ENCODE measurements at regions of chr5 and their contacts with region 1.

Region 1: GRCh38 chr5:91280362-91281269 is 102.5 kb downstream of the ARRDC3 start:
- DNase-seq: peak; percentile 73 to 94
- H3K4me3 ChIP-seq: peak overlapping the region; percentile 60 to 72
- H3K27ac ChIP-seq: peak overlapping the region; percentile 77 to 85
- H3K4me1 ChIP-seq: peaks cover 0 to 7% of the 10 kb centered on the region in 2 donors
- H3K27me3 ChIP-seq: no peaks in the 10 kb centered on the region
- CTCF ChIP-seq: no peak

Region 2: DNA sequence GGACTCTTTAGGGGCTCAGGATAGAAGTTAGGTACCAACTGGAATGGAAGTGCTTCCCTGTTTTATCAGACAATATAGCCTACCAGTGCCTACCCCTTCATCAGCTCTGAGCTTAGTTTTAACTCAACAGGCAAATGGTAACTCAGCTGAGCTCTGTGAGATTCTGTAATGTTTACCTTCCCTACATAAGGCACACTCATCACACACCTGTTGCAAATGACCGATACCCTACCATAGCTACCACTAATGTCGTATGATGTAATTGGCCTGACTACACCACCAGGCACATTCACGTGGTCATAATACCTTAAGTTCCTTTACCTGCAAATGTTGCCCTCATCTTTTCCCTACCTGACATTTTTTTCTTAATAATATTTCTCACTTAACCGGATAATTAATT is 467.2 kb before region 1 on chr5:
- intact Hi-C with region 1: no loop called
- DNase-seq: no peak
- H3K4me3 ChIP-seq: no peak overlapping the region
- H3K27ac ChIP-seq: no peak overlapping the region
- H3K4me1 ChIP-seq: no peaks in the 10 kb centered on the region
- H3K27me3 ChIP-seq: no peaks in the 10 kb centered on the region
- CTCF ChIP-seq: no peak

Region 3: DNA sequence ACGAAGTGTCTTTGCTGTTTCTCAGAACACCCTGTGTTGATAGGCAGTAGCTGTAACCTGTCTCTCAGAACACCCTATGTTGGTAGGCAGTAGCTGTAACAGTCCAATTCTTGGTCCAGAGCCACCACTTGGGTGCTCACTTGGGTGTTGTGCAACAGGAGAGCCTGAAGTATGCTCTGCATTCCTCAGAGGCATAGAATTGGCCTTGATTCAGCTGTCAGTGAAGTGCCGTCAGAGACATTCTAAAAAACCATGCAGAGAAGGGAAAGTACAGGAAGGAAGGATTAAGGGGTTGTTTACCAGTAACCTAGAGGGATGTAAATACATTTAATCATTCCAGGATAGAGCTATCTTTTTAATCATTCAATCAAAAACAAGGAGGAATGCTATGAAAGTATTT is 128.7 kb before region 1 on chr5:
- intact Hi-C with region 1: loop called (anchors 5 kb)
- DNase-seq: peak in 1 of 2 donors; percentile 87
- H3K4me3 ChIP-seq: no peak overlapping the region
- H3K27ac ChIP-seq: peak overlapping the region; percentile 6 to 8
- H3K4me1 ChIP-seq: peaks cover 6 to 31% of the 10 kb centered on the region in 2 donors
- H3K27me3 ChIP-seq: no peaks in the 10 kb centered on the region
- CTCF ChIP-seq: no peak

Region 4: GRCh38 chr5:91183737-91184136 is 96.9 kb before region 1 on chr5:
- intact Hi-C with region 1: no loop called
- DNase-seq: no peak
- H3K4me3 ChIP-seq: no peak overlapping the region
- H3K27ac ChIP-seq: no peak overlapping the region
- H3K4me1 ChIP-seq: no peaks in the 10 kb centered on the region
- H3K27me3 ChIP-seq: no peaks in the 10 kb centered on the region
- CTCF ChIP-seq: no peak

Region 5: GRCh38 chr5:91296691-91297143 is 16.1 kb after region 1 on chr5:
- intact Hi-C with region 1: loop called (anchors 2 kb)
- DNase-seq: peak in 1 of 2 donors; percentile 90
- H3K4me3 ChIP-seq: no peak overlapping the region
- H3K27ac ChIP-seq: peak overlapping the region; percentile 5 to 64
- H3K4me1 ChIP-seq: peaks cover 0 to 4% of the 10 kb centered on the region in 2 donors
- H3K27me3 ChIP-seq: no peaks in the 10 kb centered on the region
- CTCF ChIP-seq: no peak

Region 6: DNA sequence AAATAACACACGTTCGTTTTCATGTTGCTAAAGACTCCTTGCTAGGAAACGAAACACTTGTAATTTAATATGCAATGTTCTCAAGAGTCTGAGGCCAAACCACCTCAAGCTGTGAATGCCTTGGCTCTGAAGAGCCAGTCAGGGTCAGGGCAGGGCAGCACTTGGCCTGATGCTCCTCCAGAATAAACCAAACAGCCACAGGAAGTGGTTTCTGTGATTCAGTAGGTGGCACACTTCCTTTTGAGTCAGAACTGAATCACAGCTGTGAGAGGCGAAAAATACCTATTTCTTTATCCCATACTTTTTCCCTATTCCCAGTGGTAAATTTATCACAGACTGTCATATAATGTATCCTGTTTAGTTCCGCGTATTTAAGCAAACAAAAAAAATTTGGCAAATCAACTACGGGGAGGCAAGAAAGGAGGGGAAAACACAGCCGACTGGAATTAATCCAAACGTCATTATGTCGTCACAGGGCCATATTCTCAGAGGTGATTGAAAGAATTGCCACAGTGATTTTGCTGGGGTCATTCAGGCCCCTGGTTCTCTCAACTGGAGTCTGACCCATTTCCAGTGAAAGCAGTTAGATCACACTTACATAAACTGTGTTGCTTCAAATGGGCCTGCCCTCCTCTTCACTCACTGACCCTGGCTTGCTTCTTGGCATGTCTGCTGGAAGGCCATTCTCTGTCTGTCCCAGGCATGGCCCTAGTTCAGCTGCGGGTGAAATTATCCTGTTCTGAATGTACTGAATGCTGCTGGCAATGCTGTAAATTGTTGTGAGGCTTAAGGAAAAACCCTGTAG is 31.3 kb after region 1 on chr5:
- intact Hi-C with region 1: loop called (anchors 1 kb)
- DNase-seq: peak; percentile 62 to 93
- H3K4me3 ChIP-seq: no peak overlapping the region
- H3K27ac ChIP-seq: peak overlapping the region; percentile 59 to 85
- H3K4me1 ChIP-seq: peaks cover 0 to 18% of the 10 kb centered on the region in 2 donors
- H3K27me3 ChIP-seq: no peaks in the 10 kb centered on the region
- CTCF ChIP-seq: peak in 1 of 3 experiments; percentile 11